Transverse colon (tissue), 4 donors: ENCODE measurements at regions of chr5 and their contacts with region 1.

Region 1: GRCh38 chr5:181005791-181006190 is 17.1 kb downstream of the BTNL3 start:
- DNase-seq: no peak
- H3K4me3 ChIP-seq: no peak overlapping the region
- H3K27ac ChIP-seq: no peak overlapping the region
- H3K4me1 ChIP-seq: no peaks in the 10 kb centered on the region
- H3K27me3 ChIP-seq: peaks cover 13% of the 10 kb centered on the region
- CTCF ChIP-seq: no peak
- EP300 ChIP-seq: no peak
- POLR2A ChIP-seq: no peak

Region 2: DNA sequence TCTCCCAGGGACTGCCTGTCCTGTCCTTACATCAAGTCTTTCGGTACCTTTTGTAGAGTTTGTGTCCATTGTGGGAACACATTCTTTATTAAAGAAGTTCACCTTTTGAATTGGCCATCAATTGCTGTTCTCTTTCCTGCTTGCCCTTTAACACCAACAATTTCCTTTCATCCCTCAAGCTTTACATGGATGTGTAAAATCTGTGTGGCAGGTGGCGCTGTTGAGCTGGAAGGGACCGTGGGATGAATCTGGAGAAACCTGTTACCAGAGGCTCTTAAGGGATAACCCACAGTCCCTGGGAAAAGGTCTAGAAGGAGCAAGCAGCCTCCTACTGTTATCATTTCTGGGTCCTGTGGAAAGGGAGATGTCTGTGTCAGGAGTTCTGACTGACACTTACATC is 136.8 kb before region 1 on chr5:
- in situ Hi-C with region 1: no loop called
- intact Hi-C with region 1: no loop called
- DNase-seq: peak; percentile 95
- H3K4me3 ChIP-seq: no peak overlapping the region
- H3K27ac ChIP-seq: peak overlapping the region in 3 of 4 donors; percentile 8 to 36 (median 20)
- H3K4me1 ChIP-seq: peaks cover 13 to 30% (median 23%) of the 10 kb centered on the region in 4 donors
- H3K27me3 ChIP-seq: no peaks in the 10 kb centered on the region
- CTCF ChIP-seq: peak; percentile 71 to 92 (median 78)
- EP300 ChIP-seq: no peak
- POLR2A ChIP-seq: no peak

Region 3: GRCh38 chr5:180935203-180935602 is 70.6 kb before region 1 on chr5:
- in situ Hi-C with region 1: loop called in 2 of 4 experiments (anchors 5 kb)
- intact Hi-C with region 1: no loop called
- DNase-seq: no peak
- H3K4me3 ChIP-seq: no peak overlapping the region
- H3K27ac ChIP-seq: no peak overlapping the region
- H3K4me1 ChIP-seq: no peaks in the 10 kb centered on the region
- H3K27me3 ChIP-seq: no peaks in the 10 kb centered on the region
- CTCF ChIP-seq: no peak
- EP300 ChIP-seq: no peak
- POLR2A ChIP-seq: no peak

Region 4: DNA sequence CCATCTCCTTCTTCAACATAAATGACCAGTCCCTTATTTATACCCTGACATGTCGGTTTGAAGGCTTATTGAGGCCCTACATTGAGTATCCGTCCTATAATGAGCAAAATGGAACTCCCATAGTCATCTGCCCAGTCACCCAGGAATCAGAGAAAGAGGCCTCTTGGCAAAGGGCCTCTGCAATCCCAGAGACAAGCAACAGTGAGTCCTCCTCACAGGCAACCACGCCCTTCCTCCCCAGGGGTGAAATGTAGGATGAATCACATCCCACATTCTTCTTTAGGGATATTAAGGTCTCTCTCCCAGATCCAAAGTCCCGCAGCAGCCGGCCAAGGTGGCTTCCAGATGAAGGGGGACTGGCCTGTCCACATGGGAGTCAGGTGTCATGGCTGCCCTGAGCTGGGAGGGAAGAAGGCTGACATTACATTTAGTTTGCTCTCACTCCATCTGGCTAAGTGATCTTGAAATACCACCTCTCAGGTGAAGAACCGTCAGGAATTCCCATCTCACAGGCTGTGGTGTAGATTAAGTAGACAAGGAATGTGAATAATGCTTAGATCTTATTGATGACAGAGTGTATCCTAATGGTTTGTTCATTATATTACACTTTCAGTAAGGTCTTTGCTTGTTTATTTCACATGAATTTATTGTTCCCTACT is 55.4 kb before region 1 on chr5:
- in situ Hi-C with region 1: no loop called
- intact Hi-C with region 1: loop called (anchors 5 kb)
- DNase-seq: no peak
- H3K4me3 ChIP-seq: no peak overlapping the region
- H3K27ac ChIP-seq: no peak overlapping the region
- H3K4me1 ChIP-seq: no peaks in the 10 kb centered on the region
- H3K27me3 ChIP-seq: no peaks in the 10 kb centered on the region
- CTCF ChIP-seq: no peak
- EP300 ChIP-seq: no peak
- POLR2A ChIP-seq: no peak

Region 5: GRCh38 chr5:181043285-181044092 is 37.7 kb after region 1 on chr5:
- in situ Hi-C with region 1: no loop called
- intact Hi-C with region 1: no loop called
- DNase-seq: no peak
- H3K4me3 ChIP-seq: no peak overlapping the region
- H3K27ac ChIP-seq: no peak overlapping the region
- H3K4me1 ChIP-seq: no peaks in the 10 kb centered on the region
- H3K27me3 ChIP-seq: peaks cover 52% of the 10 kb centered on the region
- CTCF ChIP-seq: no peak
- EP300 ChIP-seq: no peak
- POLR2A ChIP-seq: no peak